ENCODE measurements at regions of chr12 and their contacts with region 1.

Region 1: DNA sequence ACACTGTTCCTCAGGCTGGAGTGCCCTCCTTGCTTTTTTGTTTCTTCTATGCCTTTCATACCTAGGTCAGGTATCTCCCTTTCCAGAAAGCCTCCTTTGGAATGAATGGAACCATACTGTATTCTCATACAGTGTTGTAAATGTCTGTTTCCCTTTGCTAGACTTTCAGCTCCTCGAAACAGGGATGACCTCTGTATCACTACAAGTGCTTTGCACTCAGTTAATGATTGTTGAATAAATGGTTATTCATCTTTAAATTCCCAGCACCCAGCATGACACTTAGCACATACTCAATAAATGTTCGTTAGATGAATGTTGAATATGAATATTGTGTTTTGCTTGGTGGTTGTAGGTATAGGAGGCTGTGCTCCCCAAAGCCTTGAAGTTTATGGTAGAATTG is 5.9 kb upstream of the TULP3 start:
- DNase-seq: no peak
- H3K4me3 ChIP-seq: no peak overlapping the region
- H3K27ac ChIP-seq: no peak overlapping the region
- H3K4me1 ChIP-seq: no peaks in the 10 kb centered on the region
- H3K27me3 ChIP-seq: no peaks in the 10 kb centered on the region
- CTCF ChIP-seq: no peak

Region 2: GRCh38 chr12:2324387-2324786 is 560.4 kb before region 1 on chr12:
- CTCF ChIA-PET with region 1: no interaction called
- POLR2A ChIA-PET with region 1: no interaction called
- intact Hi-C with region 1: no loop called
- DNase-seq: no peak
- H3K4me3 ChIP-seq: no peak overlapping the region
- H3K27ac ChIP-seq: no peak overlapping the region
- H3K4me1 ChIP-seq: no peaks in the 10 kb centered on the region
- H3K27me3 ChIP-seq: peaks cover 99% of the 10 kb centered on the region
- CTCF ChIP-seq: no peak

Region 3: DNA sequence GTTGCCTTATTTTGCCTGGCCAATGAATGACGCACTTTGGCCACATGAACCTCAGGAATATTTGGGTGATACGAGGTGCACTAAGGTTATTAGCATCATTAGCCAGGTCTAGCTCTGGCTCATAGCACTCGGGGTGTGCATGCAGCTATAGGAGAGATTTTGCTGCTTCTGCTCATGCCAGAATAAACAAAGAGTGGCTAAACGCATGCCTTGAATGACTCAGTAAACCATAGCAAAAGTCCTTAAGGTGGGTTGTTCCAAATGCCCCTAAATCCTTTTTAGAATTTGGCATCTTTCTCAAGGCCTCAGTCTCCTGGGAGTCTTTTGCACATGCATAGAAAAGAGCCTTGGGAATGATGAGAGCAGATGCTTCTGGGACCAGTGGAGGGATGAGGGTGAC is 433.8 kb before region 1 on chr12:
- CTCF ChIA-PET with region 1: no interaction called
- POLR2A ChIA-PET with region 1: no interaction called
- intact Hi-C with region 1: no loop called
- DNase-seq: no peak
- H3K4me3 ChIP-seq: no peak overlapping the region
- H3K27ac ChIP-seq: no peak overlapping the region
- H3K4me1 ChIP-seq: no peaks in the 10 kb centered on the region
- H3K27me3 ChIP-seq: peaks cover 87% of the 10 kb centered on the region
- CTCF ChIP-seq: no peak

Region 4: DNA sequence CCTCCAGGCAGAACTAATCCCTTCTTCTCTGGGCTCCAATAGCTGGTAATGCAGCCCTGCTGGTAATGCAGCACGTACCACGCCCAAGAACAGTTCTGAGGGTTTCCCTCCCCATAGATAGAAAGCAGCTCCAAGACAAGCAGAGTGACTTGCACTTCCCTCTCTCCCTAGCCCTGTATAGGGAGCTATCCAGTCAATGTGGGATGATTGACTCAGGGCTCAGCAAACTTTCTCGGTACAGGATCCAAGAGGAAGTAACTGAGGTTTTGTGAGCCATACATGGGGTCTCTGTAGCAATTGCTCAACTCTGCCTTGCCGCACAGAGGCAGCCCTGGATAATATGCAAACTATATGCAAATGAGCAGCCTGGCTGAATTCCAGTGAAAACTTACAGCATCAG is 105.5 kb before region 1 on chr12:
- CTCF ChIA-PET with region 1: no interaction called
- POLR2A ChIA-PET with region 1: no interaction called
- intact Hi-C with region 1: no loop called
- DNase-seq: peak in 1 of 2 experiments; percentile 46
- H3K4me3 ChIP-seq: no peak overlapping the region
- H3K27ac ChIP-seq: no peak overlapping the region
- H3K4me1 ChIP-seq: no peaks in the 10 kb centered on the region
- H3K27me3 ChIP-seq: peaks cover 93% of the 10 kb centered on the region
- CTCF ChIP-seq: no peak

Region 5: DNA sequence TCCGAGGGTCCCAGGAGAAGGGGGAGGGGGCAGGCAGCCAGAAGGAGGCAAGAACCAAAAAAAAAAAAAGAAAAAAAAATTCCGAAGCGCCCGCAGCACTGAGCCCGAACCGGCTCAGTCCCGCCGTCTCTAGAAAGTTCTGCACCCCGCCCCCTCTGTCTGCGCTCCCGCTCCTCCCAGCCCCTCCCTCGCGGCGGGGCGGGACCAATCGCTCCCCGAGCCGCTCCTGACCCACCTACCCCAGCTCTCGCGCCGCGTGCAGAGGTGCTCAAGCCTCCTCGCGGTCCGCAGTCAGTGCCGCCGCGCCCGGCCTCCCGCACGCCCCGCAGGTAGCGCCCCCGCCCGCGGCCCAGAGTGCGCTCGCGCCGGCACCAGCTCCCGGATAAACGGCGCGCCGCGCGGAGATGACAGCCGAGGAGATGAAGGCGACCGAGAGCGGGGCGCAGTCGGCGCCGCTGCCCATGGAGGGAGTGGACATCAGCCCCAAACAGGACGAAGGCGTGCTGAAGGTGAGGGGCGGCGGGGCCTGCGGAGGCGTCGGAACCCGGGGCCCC is 90.0 kb before region 1 on chr12 and contains the start of gene FKBP4:
- CTCF ChIA-PET with region 1: interaction called, 21 read pairs
- POLR2A ChIA-PET with region 1: no interaction called
- intact Hi-C with region 1: no loop called
- DNase-seq: peak; percentile 62 to 91
- H3K4me3 ChIP-seq: peak within 1 kb of the TSS; percentile 60
- H3K27ac ChIP-seq: no peak within 1 kb of the TSS
- H3K4me1 ChIP-seq: peaks cover 8% of the 10 kb centered on the region
- H3K27me3 ChIP-seq: peaks cover 6% of the 10 kb centered on the region; the same call in 1 of the 2 replicates
- CTCF ChIP-seq: no peak
- total RNA-seq, gene FKBP4: 189 and 226 TPM in 2 replicates

Region 6: DNA sequence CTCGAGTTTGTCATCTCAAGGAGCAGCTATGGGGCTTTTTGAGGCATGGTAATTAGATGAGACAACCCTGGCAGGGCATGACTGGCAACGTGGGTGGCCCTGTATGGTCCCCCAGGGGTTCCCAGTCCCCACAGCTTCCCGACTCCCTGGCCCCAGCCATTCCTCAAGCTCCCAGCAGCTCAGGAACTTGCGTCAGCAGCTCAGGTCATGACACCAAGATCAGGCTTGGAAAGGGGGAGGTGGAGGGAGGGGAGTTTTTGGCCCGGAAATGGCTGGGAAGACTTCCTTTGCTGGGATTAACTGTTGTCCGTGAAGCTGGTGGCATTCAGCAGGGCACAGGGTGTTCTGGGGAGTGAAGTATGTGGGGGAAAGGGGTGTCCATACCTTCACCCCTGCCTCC is 39.5 kb before region 1 on chr12:
- CTCF ChIA-PET with region 1: no interaction called
- POLR2A ChIA-PET with region 1: no interaction called
- intact Hi-C with region 1: no loop called
- DNase-seq: no peak
- H3K4me3 ChIP-seq: no peak overlapping the region
- H3K27ac ChIP-seq: no peak overlapping the region
- H3K4me1 ChIP-seq: no peaks in the 10 kb centered on the region
- H3K27me3 ChIP-seq: no peaks in the 10 kb centered on the region
- CTCF ChIP-seq: no peak